Heart right ventricle (tissue), 16 donors: ENCODE measurements at regions of chr9 and their contacts with region 1.

Region 1: DNA sequence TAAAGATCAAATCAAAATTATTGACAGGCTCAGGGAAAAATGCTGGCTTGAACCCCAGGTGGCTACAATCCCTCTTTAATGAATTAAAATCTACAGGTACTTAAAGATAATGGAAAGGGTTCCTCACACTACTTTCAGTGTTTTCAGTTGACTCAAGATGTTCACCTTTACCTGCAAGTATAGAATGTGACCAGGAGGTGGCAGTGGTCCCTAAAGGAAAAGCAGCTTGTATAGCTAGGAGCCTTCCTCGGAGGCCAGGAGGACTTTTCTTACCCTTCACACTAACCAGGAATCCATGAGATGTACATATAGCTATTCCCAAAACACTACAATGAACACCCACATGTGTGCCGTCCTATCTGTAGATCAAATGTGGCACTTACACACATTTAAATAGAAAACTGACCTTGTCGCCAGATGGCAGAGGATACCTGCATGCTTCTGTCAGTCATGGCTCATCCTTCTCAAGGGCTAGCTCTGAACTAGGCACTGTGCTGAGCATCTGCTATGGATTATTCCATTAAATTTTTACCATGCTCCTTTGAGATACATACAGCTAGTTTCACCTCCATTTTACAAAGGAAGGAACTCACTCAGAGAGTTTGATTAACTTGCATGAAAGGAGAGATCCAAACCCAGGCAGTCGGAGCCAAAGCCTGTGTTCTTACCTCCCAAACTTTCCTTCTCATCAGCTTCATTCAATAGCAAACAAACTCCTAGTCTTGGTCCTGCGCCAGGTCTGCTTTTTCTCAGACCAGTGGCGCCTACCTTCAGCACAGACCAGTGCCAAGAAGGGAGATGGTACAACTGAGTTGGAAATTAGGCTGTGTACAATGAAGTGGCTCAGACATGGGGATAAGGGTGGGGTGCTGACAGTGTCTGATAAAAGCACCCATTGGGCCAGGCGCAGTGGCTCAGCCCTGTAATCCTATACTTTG is 24.5 kb downstream of the C9orf152 start:
- DNase-seq: peak in 1 of 2 donors; percentile 64
- ATAC-seq: peak in 6 of 8 donors; percentile 52 to 72 (median 65)
- H3K4me3 ChIP-seq: no peak overlapping the region
- H3K27ac ChIP-seq: no peak overlapping the region
- H3K4me1 ChIP-seq: peaks cover 0 to 16% (median 0%) of the 10 kb centered on the region in 9 donors
- H3K27me3 ChIP-seq: no peaks in the 10 kb centered on the region
- CTCF ChIP-seq: peak; percentile 49 to 81 (median 72)

Region 2: DNA sequence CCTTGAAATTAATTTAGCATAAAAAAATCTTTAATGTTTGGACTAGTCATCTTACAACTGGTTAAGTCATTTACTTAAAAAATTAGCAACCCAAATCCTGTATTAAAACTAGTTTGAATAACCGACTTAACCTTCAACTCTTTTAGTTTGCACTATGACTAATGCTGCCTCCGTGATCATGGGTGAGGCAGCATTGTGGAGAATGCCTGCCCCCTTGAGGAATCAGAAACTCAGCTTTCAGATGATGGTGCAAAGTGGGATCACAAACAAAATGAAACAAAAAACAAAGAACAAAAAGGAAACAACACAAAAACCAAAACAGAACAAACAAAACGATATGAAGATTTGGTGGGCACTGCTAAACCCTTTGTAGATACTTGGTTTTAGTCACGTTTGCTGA is 530.5 kb before region 1 on chr9:
- intact Hi-C with region 1: no loop called
- DNase-seq: peak; percentile 7 to 17
- ATAC-seq: peak in 7 of 8 donors; percentile 52 to 82 (median 77)
- H3K4me3 ChIP-seq: no peak overlapping the region
- H3K27ac ChIP-seq: no peak overlapping the region
- H3K4me1 ChIP-seq: no peaks in the 10 kb centered on the region
- H3K27me3 ChIP-seq: no peaks in the 10 kb centered on the region
- CTCF ChIP-seq: peak; percentile 14 to 72 (median 45)

Region 3: DNA sequence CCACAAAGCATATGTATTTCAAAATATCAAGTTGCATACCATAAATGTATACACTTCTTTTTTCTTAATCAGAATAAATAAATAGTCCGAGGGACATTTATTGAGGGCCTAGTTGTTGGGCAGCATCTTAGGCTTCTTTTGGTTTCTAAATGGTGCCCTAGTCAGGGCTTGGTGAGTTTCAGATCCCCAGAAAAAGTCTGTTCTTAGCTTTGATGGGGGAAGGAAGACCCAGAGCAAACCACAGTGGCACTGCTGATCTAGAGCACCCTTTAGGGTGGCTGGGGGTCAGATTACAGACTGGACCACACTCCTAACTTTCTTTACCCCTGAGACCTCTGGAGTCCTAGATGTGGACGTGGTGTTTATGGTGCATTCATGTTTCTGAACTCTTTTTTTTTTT is 73.3 kb before region 1 on chr9:
- intact Hi-C with region 1: no loop called
- DNase-seq: no peak
- ATAC-seq: no peak
- H3K4me3 ChIP-seq: no peak overlapping the region
- H3K27ac ChIP-seq: no peak overlapping the region
- H3K4me1 ChIP-seq: peaks cover under 1 to 87% (median 56%) of the 10 kb centered on the region in 9 donors
- H3K27me3 ChIP-seq: no peaks in the 10 kb centered on the region
- CTCF ChIP-seq: no peak

Region 4: GRCh38 chr9:110142868-110143462 is 40.5 kb before region 1 on chr9:
- intact Hi-C with region 1: no loop called
- DNase-seq: no peak
- ATAC-seq: peak in 3 of 8 donors; percentile 22 to 34 (median 29)
- H3K4me3 ChIP-seq: no peak overlapping the region
- H3K27ac ChIP-seq: peak overlapping the region in 6 of 10 donors; percentile 15 to 64 (median 33)
- H3K4me1 ChIP-seq: peaks cover 8 to 100% (median 85%) of the 10 kb centered on the region in 9 donors
- H3K27me3 ChIP-seq: no peaks in the 10 kb centered on the region
- CTCF ChIP-seq: peak in 4 of 9 donors; percentile 19 to 31 (median 20)

Region 5: GRCh38 chr9:110217656-110218099 is 34.2 kb after region 1 on chr9:
- intact Hi-C with region 1: loop called in 6 of 10 experiments (anchors 1 to 5 kb)
- DNase-seq: no peak
- ATAC-seq: no peak
- H3K4me3 ChIP-seq: no peak overlapping the region
- H3K27ac ChIP-seq: no peak overlapping the region
- H3K4me1 ChIP-seq: peaks cover 0 to 12% (median 0%) of the 10 kb centered on the region in 9 donors
- H3K27me3 ChIP-seq: no peaks in the 10 kb centered on the region
- CTCF ChIP-seq: peak; percentile 56 to 88 (median 79)

Region 6: GRCh38 chr9:110623462-110624025 is 440.1 kb after region 1 on chr9:
- intact Hi-C with region 1: loop called in 5 of 10 experiments (anchors 1 to 10 kb)
- DNase-seq: peak in 1 of 2 donors; percentile 51
- ATAC-seq: peak in 2 of 8 donors; percentile 21 to 47
- H3K4me3 ChIP-seq: no peak overlapping the region
- H3K27ac ChIP-seq: no peak overlapping the region
- H3K4me1 ChIP-seq: no peaks in the 10 kb centered on the region
- H3K27me3 ChIP-seq: no peaks in the 10 kb centered on the region
- CTCF ChIP-seq: peak; percentile 44 to 78 (median 69)